HepG2 (cell line): ENCODE measurements at regions of chr11 and their contacts with region 1.

Region 1: DNA sequence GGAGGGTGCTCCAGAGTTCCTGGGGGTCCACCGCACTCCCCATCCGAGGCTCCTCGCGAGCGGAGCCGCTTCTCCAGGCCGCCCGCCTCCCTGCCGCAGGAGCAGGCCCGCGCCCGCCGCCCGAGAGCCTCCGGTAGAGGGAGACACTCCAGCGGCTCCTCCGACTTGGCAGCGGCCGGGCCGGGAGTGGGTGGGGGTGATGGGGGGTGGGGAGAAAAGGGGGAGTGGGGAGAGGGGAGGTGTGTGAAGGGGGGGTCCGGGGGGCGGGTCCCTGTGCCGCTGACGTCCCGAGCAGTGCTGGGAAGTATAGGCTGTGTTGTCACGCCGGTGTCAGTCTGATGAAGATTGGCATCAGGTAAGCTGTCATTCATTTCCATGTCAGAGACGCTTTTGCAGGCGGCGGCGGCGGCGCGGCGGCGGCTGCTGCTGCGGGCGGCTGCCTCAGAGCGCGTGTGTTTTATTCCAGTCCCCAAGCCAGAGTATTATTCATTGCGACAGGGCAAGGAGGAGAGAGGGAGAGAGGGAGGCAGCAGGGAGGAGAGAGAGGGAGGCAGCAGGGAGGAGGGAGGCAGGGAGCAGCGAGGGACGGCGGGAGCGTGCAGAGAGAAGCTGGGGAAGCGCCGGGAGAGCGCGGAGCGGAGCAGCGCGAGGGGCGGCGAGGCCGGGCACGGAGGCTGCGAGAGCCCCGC is at the start of gene PKNOX2:
- DNase-seq: peak; percentile 15
- ATAC-seq: peak; percentile 91
- H3K4me3 ChIP-seq: peak within 1 kb of the TSS; percentile 46 to 69 (median 47)
- H3K27ac ChIP-seq: no peak within 1 kb of the TSS
- H3K4me1 ChIP-seq: peaks cover 18% of the 10 kb centered on the region
- H3K27me3 ChIP-seq: peaks cover 2 to 76% of the 10 kb centered on the region in 2 experiments; a peak in 4 of 5 replicates
- CTCF ChIP-seq: peak; percentile 72
- EP300 ChIP-seq: no peak
- POLR2A ChIP-seq: no peak
- RAD21 ChIP-seq: 0 out of 2 replicates have a peak, but pooled peaks have one; percentile 20
- total RNA-seq, gene PKNOX2: not detected in 2 replicates

Region 2: DNA sequence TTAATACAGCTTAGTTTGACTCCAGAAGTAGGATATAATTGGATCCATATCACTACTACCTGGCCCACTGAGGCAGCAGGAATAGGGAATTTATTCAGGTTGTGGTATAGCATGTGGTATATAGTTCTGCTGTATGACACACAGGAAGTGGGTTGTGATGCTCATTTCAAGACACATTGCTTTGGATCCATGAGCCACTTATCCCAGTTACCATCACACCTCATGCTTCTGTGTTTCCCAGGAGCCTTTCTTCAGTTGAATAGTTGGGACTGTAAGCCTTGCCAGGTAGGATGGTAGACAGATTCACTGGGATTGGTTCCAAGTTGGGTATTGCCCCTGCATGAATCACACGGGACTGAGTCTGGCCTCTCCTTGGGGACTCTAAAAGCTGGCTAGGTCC is 111.4 kb before region 1 on chr11:
- CTCF ChIA-PET with region 1: no interaction called
- POLR2A ChIA-PET with region 1: no interaction called
- in situ Hi-C with region 1: no loop called
- intact Hi-C with region 1: no loop called
- DNase-seq: no peak
- ATAC-seq: no peak
- H3K4me3 ChIP-seq: no peak overlapping the region
- H3K27ac ChIP-seq: no peak overlapping the region
- H3K4me1 ChIP-seq: peaks cover 16% of the 10 kb centered on the region
- H3K27me3 ChIP-seq: no peaks in the 10 kb centered on the region
- CTCF ChIP-seq: no peak
- EP300 ChIP-seq: no peak
- POLR2A ChIP-seq: no peak
- RAD21 ChIP-seq: no peak

Region 3: DNA sequence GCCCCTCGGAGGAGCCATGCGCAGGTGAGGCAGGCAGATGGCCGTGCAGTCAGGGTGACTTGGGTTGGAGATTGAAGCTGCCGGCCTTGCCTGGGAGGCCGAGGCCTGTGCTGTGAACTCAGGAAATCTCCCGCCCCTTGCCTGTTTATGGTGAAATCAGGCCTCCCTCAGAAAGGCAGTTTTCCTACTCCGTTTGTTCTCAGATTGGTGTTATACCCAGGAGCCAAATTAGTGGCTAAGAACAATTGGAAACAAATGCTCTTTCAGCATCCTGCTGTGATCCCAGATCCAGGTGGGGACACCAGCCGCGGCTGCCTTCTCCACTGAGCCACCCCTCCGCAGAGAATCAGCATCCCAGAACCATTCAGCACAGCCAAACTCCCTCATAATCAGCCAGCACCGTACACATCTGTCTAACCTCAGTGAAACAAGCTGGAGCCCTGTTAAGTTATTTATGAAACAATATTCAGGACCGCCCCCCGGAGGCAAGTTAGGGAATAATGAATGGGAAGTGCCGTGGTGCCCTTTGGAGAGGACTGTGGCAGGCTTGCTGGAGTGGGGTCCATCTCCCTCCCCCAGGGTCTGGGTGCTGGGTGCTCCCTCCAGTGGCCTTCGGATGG is 59.9 kb after region 1 on chr11:
- CTCF ChIA-PET with region 1: no interaction called
- POLR2A ChIA-PET with region 1: no interaction called
- in situ Hi-C with region 1: no loop called
- intact Hi-C with region 1: loop called (anchors 10 kb)
- DNase-seq: peak; percentile 9
- ATAC-seq: peak; percentile 67
- H3K4me3 ChIP-seq: no peak overlapping the region
- H3K27ac ChIP-seq: no peak overlapping the region
- H3K4me1 ChIP-seq: no peaks in the 10 kb centered on the region
- H3K27me3 ChIP-seq: peaks cover 5 to 25% of the 10 kb centered on the region in 2 experiments
- CTCF ChIP-seq: peak; percentile 25; the same call in 1 of the 2 replicates
- EP300 ChIP-seq: no peak
- POLR2A ChIP-seq: no peak
- RAD21 ChIP-seq: no peak

Region 4: DNA sequence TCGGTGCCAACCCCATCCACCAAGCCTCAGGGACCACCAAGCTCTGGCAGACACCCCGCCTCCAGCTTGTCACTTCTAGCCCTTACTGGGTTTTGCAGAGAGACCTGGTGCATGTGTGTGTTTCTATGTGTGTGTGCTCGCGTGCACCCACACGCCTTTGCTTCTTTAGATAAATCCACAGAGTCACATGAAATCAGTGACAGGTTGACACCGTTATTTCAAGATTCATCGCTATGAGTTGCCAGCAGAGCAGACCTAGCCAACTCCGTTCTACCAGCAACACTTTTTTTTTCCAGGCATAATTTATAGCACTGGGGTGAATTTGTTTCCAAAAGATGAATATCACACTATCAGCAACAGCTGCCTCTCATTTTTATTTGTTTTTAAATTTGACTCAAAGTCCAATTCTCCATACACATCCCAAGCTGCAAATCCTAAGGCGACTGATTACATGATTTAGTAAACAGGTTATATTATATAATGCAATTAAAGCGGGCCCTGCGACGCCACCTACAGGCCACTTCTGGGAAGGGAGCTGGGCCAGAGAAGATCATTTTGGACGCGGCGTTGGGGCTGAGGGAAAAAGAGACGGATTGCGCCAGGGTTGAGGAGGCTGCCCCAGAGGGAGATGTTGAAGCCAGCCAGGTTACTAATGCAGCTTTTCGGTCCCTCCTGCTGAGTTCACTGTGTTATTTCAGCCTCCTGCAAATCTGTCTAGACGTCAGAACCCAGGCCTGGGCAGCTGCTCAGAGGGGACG is 181.0 kb after region 1 on chr11:
- CTCF ChIA-PET with region 1: interaction called, 5 read pairs
- POLR2A ChIA-PET with region 1: no interaction called
- in situ Hi-C with region 1: loop called (anchors 5 kb)
- intact Hi-C with region 1: loop called (anchors 1 kb)
- DNase-seq: peak; percentile 15
- ATAC-seq: peak; percentile 62
- H3K4me3 ChIP-seq: no peak overlapping the region
- H3K27ac ChIP-seq: no peak overlapping the region
- H3K4me1 ChIP-seq: no peaks in the 10 kb centered on the region
- H3K27me3 ChIP-seq: peaks cover 5 to 57% of the 10 kb centered on the region in 2 experiments; a peak in 3 of 5 replicates
- CTCF ChIP-seq: peak; percentile 64
- EP300 ChIP-seq: no peak; a peak in 1 of 4 replicates
- POLR2A ChIP-seq: no peak
- RAD21 ChIP-seq: no peak